Common myeloid progenitor, CD34-positive (primary cell): ENCODE measurements at regions of chr3 and their contacts with region 1.

Region 1: GRCh38 chr3:4350789-4351163 is 47.6 kb downstream of the SETMAR start:
- DNase-seq: peak; percentile 85 to 92 (median 89)
- H3K4me3 ChIP-seq: peak overlapping the region in 5 of 7 experiments; percentile 59 to 83 (median 75)
- H3K27ac ChIP-seq: peak overlapping the region in 1 of 2 experiments; percentile 77
- H3K4me1 ChIP-seq: peaks cover 4 to 14% (median 12%) of the 10 kb centered on the region in 4 experiments
- H3K27me3 ChIP-seq: no peaks in the 10 kb centered on the region

Region 2: DNA sequence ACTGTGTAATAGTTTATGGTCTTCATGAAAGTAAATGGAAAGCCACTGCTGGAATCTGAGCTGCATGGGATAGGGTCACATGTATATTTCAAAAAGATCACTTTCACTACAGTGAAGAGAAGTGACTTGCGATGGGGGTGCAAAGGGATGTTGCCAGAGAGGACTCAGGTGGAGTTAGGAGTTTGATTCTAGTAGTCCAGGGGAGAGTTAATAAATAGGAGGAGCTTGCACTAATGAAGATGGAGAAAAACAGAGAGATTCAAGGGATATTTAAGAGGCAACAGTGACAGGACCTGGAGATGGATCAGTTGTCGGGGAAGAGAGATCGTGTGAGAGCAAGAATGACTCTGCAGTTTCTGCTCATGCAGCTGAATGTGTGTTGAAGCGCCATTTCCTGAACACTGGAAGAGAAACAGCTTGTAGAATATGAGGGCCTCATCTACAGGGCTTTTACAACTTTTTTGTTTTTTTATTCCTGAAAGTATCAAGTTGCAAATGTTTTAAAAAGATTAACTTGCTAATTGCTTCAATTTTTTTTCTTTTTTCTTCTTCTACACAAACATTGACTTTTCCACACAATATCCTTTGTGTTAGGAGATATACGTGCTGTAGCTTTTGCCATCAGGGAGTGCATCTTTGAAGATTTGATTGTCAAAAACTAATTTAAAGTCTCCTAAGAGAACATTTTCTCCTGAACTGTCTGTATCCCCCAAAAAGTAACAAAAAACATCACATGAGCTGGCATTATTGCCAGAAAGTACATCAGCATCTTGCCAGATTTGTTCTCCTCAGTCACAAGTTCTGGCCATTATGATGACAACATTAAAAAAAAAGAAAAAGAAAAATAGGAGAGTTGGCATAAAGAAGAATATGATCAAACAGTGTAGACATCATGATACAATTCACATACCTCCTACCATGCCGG is 10.1 kb before region 1 on chr3:
- CTCF ChIA-PET with region 1: interaction called, 23 read pairs
- POLR2A ChIA-PET with region 1: no interaction called
- DNase-seq: peak; percentile 71 to 94 (median 92)
- H3K4me3 ChIP-seq: peak overlapping the region in 6 of 7 experiments; percentile 11 to 64 (median 42)
- H3K27ac ChIP-seq: peak overlapping the region; percentile 30 to 69
- H3K4me1 ChIP-seq: peaks cover 3 to 17% (median 10%) of the 10 kb centered on the region in 4 experiments
- H3K27me3 ChIP-seq: no peaks in the 10 kb centered on the region

Region 3: GRCh38 chr3:4360817-4361216 is 10.0 kb after region 1 on chr3:
- CTCF ChIA-PET with region 1: interaction called, 14 read pairs
- POLR2A ChIA-PET with region 1: no interaction called
- DNase-seq: no peak
- H3K4me3 ChIP-seq: no peak overlapping the region
- H3K27ac ChIP-seq: no peak overlapping the region
- H3K4me1 ChIP-seq: peaks cover 0 to 5% (median 2%) of the 10 kb centered on the region in 4 experiments
- H3K27me3 ChIP-seq: no peaks in the 10 kb centered on the region

Region 4: GRCh38 chr3:4413467-4413866 is 62.7 kb after region 1 on chr3:
- CTCF ChIA-PET with region 1: interaction called, 12 read pairs
- POLR2A ChIA-PET with region 1: no interaction called
- DNase-seq: no peak
- H3K4me3 ChIP-seq: no peak overlapping the region
- H3K27ac ChIP-seq: no peak overlapping the region
- H3K4me1 ChIP-seq: peaks cover 0 to 20% (median 14%) of the 10 kb centered on the region in 4 experiments
- H3K27me3 ChIP-seq: no peaks in the 10 kb centered on the region

Region 5: DNA sequence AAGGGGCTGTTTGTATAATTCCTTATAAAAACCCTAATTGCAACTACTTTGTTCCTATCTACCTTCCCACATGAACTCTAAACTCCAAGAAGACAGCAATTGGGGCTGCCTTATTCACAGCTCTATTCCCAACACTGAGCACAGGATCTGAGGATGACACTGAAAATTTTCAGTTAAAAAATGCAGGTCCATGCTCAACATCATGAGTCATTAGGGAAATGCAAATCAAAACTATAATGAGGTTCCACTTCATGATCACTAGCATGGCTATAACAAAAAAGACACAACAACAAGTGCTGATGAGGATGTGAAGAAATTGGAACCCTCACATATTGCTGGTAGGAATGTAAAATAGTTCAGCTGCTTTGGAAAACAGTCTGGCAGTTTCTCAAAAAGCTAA is 103.4 kb after region 1 on chr3:
- CTCF ChIA-PET with region 1: no interaction called
- POLR2A ChIA-PET with region 1: no interaction called
- DNase-seq: no peak
- H3K4me3 ChIP-seq: no peak overlapping the region
- H3K27ac ChIP-seq: no peak overlapping the region
- H3K4me1 ChIP-seq: no peaks in the 10 kb centered on the region
- H3K27me3 ChIP-seq: no peaks in the 10 kb centered on the region

Region 6: DNA sequence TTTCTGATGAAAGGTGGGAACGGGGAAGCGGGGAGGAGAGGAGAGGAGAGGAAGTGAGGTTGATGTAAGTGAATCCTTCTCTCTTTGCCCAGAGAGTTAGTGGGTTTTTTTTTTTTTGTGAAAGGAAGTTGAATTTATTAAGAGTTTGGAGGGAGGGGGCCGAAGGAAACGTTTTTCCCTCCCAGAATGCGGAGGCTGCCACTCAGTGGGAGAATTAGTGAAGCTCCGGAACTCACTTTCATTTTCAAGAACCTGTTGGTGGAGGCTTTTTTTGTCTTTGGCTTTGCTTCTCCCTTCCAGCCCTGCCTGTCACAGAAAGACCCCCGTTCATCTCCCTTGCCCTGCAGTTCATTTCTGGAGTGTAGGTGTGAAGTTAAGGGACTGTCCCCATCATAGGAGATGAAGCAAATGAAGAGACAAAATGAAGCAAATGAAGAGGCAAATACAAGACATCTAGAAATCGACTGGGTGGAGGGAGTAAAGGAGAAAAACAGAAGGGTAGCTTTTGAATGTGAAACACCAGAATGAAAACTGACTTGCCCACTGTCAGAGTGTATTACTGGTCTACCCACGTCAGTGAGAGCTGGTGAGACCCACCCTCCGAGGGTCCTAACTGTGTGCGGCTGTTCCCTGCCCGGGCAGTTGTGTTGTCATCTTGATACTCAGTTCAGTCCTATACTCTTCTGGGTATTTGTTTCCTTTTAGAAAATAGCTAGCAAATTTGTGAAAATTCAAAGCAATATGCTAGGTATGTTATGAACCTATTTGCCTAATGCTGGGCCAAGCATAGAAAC is 233.9 kb after region 1 on chr3:
- CTCF ChIA-PET with region 1: interaction called, 14 read pairs
- POLR2A ChIA-PET with region 1: no interaction called
- DNase-seq: peak; percentile 63 to 82 (median 80)
- H3K4me3 ChIP-seq: peak overlapping the region in 6 of 7 experiments; percentile 30 to 78 (median 61)
- H3K27ac ChIP-seq: peak overlapping the region; percentile 29 to 82
- H3K4me1 ChIP-seq: peaks cover 0 to 84% (median 60%) of the 10 kb centered on the region in 4 experiments
- H3K27me3 ChIP-seq: no peaks in the 10 kb centered on the region